Activated T-helper 1 cell treated with anti-CD3 and anti-CD28 coated beads, Interleukin-12 subunit alpha, Interleukin-12 subunit beta, Interleukin-2, Interleukin-4 antibody, amounts not matched to agents 30 ng/mL and 10 ng/mL and 1 ng/mL, durations not matched to agents 14 hours and 24 hours and 36 hours (primary cell): ENCODE measurements at regions of chr11 and their contacts with region 1.

Region 1: DNA sequence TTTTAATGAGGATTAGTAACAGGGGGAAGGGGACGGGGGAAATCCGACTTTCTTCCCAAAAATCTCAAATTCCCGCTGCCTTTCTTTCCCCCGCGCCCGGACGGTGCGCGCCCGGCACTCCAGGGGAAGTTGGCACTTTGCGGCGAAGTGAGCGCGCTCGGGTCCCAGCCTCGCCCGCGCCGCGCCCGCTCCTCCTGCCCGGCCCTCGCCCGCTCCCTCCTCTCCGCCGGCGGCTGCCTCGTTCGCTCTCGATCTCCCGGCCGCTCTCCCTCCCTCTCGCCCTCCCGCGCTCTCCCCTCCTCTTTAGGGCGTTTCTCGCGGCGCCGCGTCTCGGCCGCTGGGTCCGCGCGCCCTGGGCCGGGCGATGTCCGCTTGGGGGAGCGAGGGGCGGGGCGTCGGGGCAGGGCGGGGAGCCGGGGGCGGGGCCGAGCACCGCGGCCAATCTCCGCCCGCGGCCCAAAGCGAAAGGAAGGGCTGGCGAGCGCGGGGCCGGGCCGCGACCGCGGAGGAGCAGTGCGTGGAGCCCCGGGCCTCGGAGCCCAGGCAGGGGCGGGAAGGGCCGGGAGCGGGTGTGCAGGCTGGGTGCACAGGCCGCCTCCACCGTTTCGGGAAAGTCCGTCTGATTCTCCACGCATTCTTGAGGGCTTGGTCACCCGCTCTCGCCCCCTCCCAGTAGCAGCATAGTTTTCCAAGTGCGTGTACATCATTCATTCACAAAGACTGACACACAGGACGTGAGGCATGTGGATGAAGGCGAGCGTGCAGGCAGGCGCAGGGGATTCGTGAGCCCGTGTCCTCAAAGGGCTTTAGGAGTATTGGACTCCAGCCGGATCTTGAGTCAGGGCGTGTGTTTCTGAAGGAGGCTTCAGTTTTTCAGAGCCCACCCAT is 65.1 kb downstream of the ETS1 start:
- DNase-seq: peak; percentile 91
- H3K4me3 Mint-ChIP-seq: peak overlapping the region; percentile 96
- H3K27ac Mint-ChIP-seq: peak overlapping the region; percentile 98
- H3K4me1 Mint-ChIP-seq: peaks cover 65% of the 10 kb centered on the region
- H3K27me3 Mint-ChIP-seq: no peaks in the 10 kb centered on the region

Region 2: GRCh38 chr11:128226106-128226716 is 296.1 kb before region 1 on chr11:
- intact Hi-C with region 1: loop called (anchors 1 kb)
- DNase-seq: no peak
- H3K4me3 Mint-ChIP-seq: peak overlapping the region; percentile 37
- H3K27ac Mint-ChIP-seq: peak overlapping the region; percentile 89
- H3K4me1 Mint-ChIP-seq: peaks cover 44% of the 10 kb centered on the region
- H3K27me3 Mint-ChIP-seq: no peaks in the 10 kb centered on the region

Region 3: DNA sequence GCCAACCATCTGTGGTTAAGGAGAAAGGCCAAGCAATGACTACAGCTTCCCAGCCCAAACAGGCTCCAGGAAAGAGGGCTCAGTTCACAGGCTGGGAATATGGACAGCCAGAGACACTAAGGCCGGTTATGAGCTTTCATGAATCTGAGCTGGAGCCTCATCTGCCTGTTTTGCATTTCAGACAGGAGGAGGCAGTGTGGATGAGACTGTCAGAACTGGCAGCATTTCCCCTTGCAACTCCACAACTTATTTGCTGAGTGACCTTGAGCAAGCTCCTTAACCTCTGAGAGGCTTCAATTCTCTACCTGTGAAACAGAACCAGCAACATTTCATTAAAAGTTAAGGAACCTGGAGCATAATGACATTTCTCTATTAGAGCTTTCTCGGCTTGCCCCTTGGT is 198.9 kb before region 1 on chr11:
- intact Hi-C with region 1: loop called (anchors 1 kb)
- DNase-seq: no peak
- H3K4me3 Mint-ChIP-seq: peak overlapping the region; percentile 70
- H3K27ac Mint-ChIP-seq: peak overlapping the region; percentile 95
- H3K4me1 Mint-ChIP-seq: peaks cover 91% of the 10 kb centered on the region
- H3K27me3 Mint-ChIP-seq: no peaks in the 10 kb centered on the region

Region 4: GRCh38 chr11:128506999-128507611 is 15.2 kb before region 1 on chr11:
- intact Hi-C with region 1: loop called (anchors 1 kb)
- DNase-seq: no peak
- H3K4me3 Mint-ChIP-seq: peak overlapping the region; percentile 96
- H3K27ac Mint-ChIP-seq: peak overlapping the region; percentile 98
- H3K4me1 Mint-ChIP-seq: peaks cover 100% of the 10 kb centered on the region
- H3K27me3 Mint-ChIP-seq: peaks cover 1% of the 10 kb centered on the region

Region 5: DNA sequence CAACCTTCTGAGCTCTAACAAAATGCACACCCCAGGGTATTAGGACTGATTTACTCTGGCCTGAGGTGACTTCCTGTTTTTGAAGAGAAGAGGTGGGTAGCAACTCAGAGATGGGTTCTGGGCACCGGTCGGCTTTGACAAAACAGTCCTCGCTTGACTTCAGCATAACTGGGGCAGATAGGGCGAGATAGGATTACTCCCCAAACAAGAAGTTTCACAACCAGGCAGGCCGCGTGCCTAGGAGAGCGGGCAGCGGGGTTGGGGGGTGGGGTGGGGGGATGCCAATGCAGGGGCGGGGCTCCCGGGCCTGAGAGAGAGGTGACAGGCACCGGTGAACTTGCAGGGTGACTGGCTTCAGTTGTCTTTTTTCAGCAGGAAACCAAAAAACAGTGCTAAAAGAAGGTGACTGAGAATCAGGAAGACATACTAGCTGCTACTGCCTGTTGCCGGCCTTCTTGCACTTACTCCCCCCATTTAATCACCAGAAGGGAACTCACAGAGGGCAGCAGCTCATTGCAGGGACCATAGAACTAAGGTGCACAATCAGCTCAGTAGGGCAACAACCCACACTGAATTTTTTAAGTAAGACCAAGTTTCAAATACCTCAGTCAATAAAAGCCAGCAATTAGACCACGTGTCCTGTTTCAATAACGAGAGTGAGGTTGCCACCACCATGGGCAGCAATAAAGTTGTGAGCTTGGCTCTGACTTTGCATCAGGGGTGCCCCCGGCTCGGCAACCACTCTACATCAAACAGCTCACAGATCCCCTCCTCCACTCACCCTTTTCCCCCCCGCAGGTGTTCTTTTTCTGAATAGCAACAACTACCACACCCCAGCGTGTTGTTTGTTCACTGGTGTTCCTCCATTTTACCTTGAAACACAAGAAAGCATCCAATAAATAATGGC is 102.2 kb after region 1 on chr11:
- intact Hi-C with region 1: loop called (anchors 1 kb)
- DNase-seq: peak; percentile 54
- H3K4me3 Mint-ChIP-seq: peak overlapping the region; percentile 75
- H3K27ac Mint-ChIP-seq: peak overlapping the region; percentile 97
- H3K4me1 Mint-ChIP-seq: peaks cover 94% of the 10 kb centered on the region
- H3K27me3 Mint-ChIP-seq: no peaks in the 10 kb centered on the region

Region 6: DNA sequence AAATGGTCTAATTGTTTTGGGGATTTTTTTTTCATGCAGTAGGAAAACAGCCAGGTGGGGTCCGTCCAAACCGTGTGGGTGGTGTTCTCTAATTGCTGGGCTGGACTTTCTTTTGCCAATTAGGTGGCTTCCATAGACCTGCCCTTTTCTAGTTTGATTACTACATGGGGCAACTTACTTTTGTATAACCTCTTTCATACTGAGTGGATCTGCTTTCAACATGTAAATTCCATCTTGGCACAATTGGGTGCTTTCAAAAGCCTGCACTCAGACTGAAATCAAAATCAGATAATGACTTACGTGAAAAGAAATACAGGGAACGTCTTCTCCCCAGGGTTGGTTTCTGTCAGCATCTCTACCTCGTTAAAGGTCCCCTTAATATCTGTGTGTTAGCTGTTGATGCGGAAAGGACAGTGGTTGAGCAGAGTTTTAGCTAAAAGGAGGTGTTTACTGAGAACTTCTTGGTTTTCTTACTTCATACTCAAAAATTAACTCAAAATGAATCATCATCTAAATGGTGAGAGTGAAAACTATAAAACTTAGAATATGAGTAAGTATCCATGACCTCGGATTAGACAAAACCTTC is 925.4 kb after region 1 on chr11:
- intact Hi-C with region 1: loop called (anchors 5 kb)
- DNase-seq: no peak
- H3K4me3 Mint-ChIP-seq: no peak overlapping the region
- H3K27ac Mint-ChIP-seq: peak overlapping the region; percentile 66
- H3K4me1 Mint-ChIP-seq: peaks cover 32% of the 10 kb centered on the region
- H3K27me3 Mint-ChIP-seq: peaks cover 2% of the 10 kb centered on the region